Naive thymus-derived CD4-positive, alpha-beta T cell (primary cell): ENCODE measurements at regions of chr3 and their contacts with region 1.

Region 1: DNA sequence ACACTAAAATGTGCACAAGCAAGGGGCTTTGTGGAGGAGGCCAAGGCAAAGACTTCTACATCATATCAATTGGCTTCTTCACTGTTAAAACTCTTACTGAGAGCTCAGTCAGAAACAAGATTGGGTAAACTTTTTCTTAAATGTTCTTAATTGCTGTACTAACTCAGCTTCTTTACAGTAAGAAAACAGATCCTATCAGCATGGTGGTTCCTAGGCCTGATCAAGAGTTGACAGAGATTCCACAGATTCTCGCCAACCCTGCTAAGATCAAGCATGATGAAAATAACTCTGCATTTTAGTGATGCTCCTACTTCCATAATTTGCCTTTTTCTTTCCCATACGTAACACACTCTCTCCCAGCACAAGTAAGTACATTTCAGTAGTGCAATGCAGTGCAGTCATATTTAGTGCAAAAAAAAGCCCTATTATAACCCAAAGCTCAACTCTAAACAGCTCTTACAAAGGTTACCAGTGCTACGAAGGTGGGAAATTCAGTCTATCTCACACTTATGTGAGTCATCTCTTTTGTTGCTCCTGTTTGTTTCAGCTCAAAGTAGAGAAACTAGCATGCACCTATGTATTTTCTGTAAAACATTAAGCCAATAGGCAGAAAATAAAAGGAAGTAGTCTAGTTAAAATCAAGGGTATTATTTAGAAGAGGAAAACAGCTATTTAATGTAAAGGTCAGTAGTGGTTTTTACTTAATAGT is 29.9 kb downstream of the TIGIT start:
- DNase-seq: no peak
- ATAC-seq: peak; percentile 50
- H3K4me3 ChIP-seq: no peak overlapping the region
- H3K4me3 Mint-ChIP-seq: peak overlapping the region in 1 of 10 donors; percentile 13
- H3K27ac ChIP-seq: no peak overlapping the region
- H3K27ac Mint-ChIP-seq: peak overlapping the region in 2 of 9 donors; percentile 22 to 55
- H3K4me1 ChIP-seq: peaks cover 0 to 27% of the 10 kb centered on the region in 2 donors
- H3K4me1 Mint-ChIP-seq: peaks cover 0 to 39% (median 6%) of the 10 kb centered on the region in 7 donors
- H3K27me3 ChIP-seq: no peaks in the 10 kb centered on the region
- H3K27me3 Mint-ChIP-seq: no peaks in the 10 kb centered on the region

Region 2: DNA sequence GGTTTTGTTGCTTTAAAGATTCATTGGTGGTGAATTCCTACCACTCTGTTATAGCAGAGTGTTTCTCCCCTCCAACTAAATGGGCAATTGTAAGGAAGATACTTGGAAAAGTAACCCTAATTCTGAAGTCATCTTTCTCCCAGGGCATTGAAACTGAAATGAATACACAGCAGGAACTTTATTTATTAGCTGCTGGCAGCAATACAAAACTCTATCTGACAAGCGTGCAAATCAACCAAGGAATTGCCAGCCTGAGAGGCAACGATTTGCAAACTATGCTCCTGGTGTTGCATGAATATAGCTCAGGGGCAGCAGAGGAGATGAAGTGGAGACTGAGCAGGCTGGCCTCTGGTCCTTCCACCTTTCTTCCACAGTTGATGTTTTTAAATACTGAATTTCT is 1397.7 kb before region 1 on chr3:
- CTCF ChIA-PET with region 1: interaction called, 15 read pairs
- POLR2A ChIA-PET with region 1: no interaction called
- intact Hi-C with region 1: no loop called
- DNase-seq: no peak
- ATAC-seq: no peak
- H3K4me3 ChIP-seq: no peak overlapping the region
- H3K4me3 Mint-ChIP-seq: no peak overlapping the region
- H3K27ac ChIP-seq: no peak overlapping the region
- H3K27ac Mint-ChIP-seq: peak overlapping the region in 5 of 9 donors; percentile 20 to 79 (median 68)
- H3K4me1 ChIP-seq: no peaks in the 10 kb centered on the region
- H3K4me1 Mint-ChIP-seq: peaks cover 0 to 35% (median 14%) of the 10 kb centered on the region in 7 donors
- H3K27me3 ChIP-seq: no peaks in the 10 kb centered on the region
- H3K27me3 Mint-ChIP-seq: no peaks in the 10 kb centered on the region

Region 3: DNA sequence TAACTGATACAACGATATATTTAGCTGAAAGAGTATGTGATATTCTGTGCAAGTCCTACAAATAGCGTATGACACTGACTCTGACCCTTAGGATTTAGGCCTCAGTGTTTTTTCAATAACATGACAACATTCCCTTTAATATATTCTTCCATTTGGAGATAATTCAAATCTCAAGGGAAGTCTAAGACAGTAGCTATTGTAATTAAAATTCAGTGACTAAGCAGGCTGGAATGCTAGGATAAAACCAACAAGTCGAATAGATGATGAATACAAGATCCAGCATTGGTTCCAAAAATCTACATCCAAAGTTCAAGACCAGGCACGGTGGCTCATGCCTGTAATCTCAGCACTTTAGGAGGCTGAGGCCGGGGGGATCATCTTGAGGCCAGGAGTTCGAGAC is 211.0 kb before region 1 on chr3:
- CTCF ChIA-PET with region 1: no interaction called
- POLR2A ChIA-PET with region 1: no interaction called
- intact Hi-C with region 1: no loop called
- DNase-seq: no peak
- ATAC-seq: no peak
- H3K4me3 ChIP-seq: no peak overlapping the region
- H3K4me3 Mint-ChIP-seq: no peak overlapping the region
- H3K27ac ChIP-seq: no peak overlapping the region
- H3K27ac Mint-ChIP-seq: no peak overlapping the region
- H3K4me1 ChIP-seq: no peaks in the 10 kb centered on the region
- H3K4me1 Mint-ChIP-seq: peaks cover 0 to 3% (median 0%) of the 10 kb centered on the region in 7 donors
- H3K27me3 ChIP-seq: no peaks in the 10 kb centered on the region
- H3K27me3 Mint-ChIP-seq: peaks cover 4 to 28% (median 21%) of the 10 kb centered on the region in 5 donors